HCT116 (cell line): ENCODE measurements at regions of chr18 and their contacts with region 1.

Region 1: DNA sequence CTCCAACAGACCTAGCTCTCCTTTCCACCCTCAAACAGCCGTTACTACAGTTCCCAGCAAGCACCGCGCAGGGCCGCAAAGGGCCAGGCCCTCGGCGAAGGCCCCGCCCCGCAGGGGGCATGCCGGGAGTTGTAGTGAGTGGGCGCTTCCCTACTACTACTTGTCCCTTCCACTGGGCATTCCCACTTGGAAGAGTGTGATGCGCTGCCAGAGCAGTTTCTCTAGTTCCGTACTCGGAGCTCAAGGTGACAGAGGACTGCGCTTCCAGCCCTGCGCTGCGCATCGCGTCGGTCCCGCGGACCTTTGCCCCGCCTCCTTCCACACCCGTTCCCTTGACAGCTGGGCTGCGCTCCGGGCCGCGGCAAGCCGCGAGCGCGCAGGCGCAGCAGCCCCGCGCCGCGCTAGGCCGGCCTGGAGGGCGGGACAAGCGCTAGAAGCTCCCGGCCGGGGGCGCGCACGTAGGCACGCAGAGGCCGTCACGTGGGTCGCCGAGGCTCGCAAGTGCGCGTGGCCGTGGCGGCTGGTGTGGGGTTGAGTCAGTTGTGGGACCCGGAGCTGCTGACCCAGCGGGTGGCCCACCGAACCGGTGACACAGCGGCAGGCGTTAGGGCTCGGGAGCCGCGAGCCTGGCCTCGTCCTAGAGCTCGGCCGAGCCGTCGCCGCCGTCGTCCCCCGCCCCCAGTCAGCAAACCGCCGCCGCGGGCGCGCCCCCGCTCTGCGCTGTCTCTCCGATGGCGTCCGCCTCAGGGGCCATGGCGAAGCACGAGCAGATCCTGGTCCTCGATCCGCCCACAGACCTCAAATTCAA is at the start of gene VAPA:
- DNase-seq: peak; percentile 90
- ATAC-seq: peak; percentile 87
- H3K4me3 ChIP-seq: peak within 1 kb of the TSS; percentile 64 to 78
- H3K27ac ChIP-seq: peak within 1 kb of the TSS; percentile 98
- H3K4me1 ChIP-seq: peaks cover 31 to 43% of the 10 kb centered on the region in 2 experiments
- H3K27me3 ChIP-seq: no peaks in the 10 kb centered on the region
- CTCF ChIP-seq: no peak
- POLR2A ChIP-seq: peak; percentile 63
- RAD21 ChIP-seq: no peak
- total RNA-seq, gene VAPA: 295 TPM

Region 2: GRCh38 chr18:9614401-9615279 is 299.1 kb before region 1 on chr18 and contains the start of gene PPP4R1:
- CTCF ChIA-PET with region 1: no interaction called
- POLR2A ChIA-PET with region 1: no interaction called
- RAD21 ChIA-PET with region 1: no interaction called
- intact Hi-C with region 1: loop called (anchors 10 kb)
- DNase-seq: no peak
- ATAC-seq: peak; percentile 76
- H3K4me3 ChIP-seq: peak within 1 kb of the TSS; percentile 78 to 87
- H3K27ac ChIP-seq: peak within 1 kb of the TSS; percentile 85
- H3K4me1 ChIP-seq: peaks cover 18 to 41% of the 10 kb centered on the region in 2 experiments
- H3K27me3 ChIP-seq: no peaks in the 10 kb centered on the region
- CTCF ChIP-seq: no peak
- POLR2A ChIP-seq: peak; percentile 43
- RAD21 ChIP-seq: no peak
- total RNA-seq, gene PPP4R1: 66.7 TPM

Region 3: DNA sequence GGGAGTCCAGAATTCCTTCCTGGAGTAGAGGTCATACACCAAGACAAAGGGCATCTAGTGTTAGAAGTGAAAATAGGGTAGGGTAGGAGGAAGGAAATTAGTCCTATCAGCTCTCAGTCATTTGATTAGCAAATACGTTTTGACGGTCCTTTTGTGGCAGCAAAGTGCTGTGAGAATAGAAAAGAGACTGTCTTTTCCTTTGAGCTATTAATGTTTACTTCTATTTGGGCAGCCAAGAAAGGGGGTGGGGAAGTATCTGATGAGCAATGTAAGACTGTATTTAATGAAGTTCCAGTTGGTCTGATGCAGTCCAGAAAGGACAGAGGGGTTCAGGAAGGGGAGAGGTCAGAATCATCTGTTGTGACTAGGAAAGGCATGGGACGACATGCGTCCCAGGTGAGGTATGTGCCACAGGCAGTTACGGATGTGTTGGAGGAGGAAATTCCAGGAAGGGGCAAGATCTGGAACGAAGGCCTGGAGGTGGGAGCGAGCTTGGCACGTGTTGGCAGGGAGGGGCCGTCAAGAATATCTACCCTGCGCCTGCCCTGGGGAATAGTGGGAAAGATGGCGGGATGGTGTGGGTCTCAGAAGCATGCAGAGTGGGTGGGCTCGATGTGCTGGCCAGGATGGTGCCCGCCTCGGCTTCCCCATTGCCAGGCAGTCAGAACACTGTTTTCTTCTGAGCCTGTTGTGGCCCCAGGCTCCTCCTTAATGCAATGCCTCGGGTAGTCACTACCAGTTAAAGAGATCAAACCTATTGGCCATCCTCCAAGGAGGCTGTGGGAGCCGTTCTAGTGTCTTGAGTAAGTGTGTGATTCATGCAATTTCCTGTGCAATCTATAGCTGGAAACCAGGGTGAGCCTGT is 85.9 kb before region 1 on chr18:
- CTCF ChIA-PET with region 1: interaction called, 3 read pairs
- POLR2A ChIA-PET with region 1: interaction called, 3 read pairs
- RAD21 ChIA-PET with region 1: no interaction called
- intact Hi-C with region 1: loop called (anchors 2 kb)
- DNase-seq: peak; percentile 97
- ATAC-seq: peak; percentile 81
- H3K4me3 ChIP-seq: peak overlapping the region in 1 of 2 experiments; percentile 42; a peak in 3 of 4 replicates
- H3K27ac ChIP-seq: peak overlapping the region; percentile 87
- H3K4me1 ChIP-seq: peaks cover 59 to 76% of the 10 kb centered on the region in 2 experiments
- H3K27me3 ChIP-seq: no peaks in the 10 kb centered on the region
- CTCF ChIP-seq: no peak
- POLR2A ChIP-seq: peak; percentile 31
- RAD21 ChIP-seq: no peak

Region 4: DNA sequence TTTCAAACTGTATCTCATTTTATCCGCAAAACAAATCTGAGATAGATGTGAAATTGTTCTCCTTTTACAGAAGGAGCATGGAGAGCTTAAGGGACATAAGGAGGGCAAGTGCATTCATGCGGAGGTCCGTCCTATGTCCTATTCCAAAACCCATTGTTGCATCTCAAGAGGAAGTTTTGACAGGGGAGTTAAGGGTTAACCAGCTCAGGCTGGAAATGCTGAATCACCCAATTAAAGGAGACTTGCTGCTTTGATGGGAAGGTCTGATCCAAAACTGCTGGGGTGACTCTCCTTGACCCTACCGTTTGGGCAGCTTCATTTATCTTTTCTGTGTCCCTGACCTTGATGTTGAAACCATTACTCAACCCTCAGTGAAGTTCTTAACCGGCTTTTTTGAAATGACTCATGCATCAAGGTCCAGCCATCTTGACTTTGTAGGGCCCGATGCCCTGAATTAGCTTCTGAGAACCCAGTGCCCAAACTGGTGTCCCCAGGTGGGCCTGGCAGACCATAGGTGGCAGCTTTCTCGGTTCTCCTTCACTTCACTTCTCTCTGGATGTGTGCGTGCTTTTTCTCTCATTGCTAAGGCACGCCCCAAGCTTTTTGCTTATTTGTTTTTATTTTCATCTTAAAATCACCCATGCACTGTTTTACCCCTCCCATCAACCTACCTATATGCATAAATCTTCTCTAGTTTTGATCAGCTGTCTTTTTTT is 43.9 kb before region 1 on chr18:
- CTCF ChIA-PET with region 1: no interaction called
- POLR2A ChIA-PET with region 1: interaction called, 12 read pairs
- RAD21 ChIA-PET with region 1: no interaction called
- intact Hi-C with region 1: loop called (anchors 1 kb)
- DNase-seq: peak; percentile 93
- ATAC-seq: peak; percentile 75
- H3K4me3 ChIP-seq: peak overlapping the region in 1 of 2 experiments; percentile 21; a peak in 2 of 4 replicates
- H3K27ac ChIP-seq: peak overlapping the region; percentile 73
- H3K4me1 ChIP-seq: peaks cover 33 to 69% of the 10 kb centered on the region in 2 experiments
- H3K27me3 ChIP-seq: no peaks in the 10 kb centered on the region
- CTCF ChIP-seq: no peak
- POLR2A ChIP-seq: no peak
- RAD21 ChIP-seq: peak; percentile 35; the same call in 1 of the 2 replicates

Region 5: GRCh38 chr18:9961041-9961440 is 47.3 kb after region 1 on chr18:
- CTCF ChIA-PET with region 1: no interaction called
- POLR2A ChIA-PET with region 1: no interaction called
- RAD21 ChIA-PET with region 1: no interaction called
- intact Hi-C with region 1: no loop called
- DNase-seq: no peak
- ATAC-seq: no peak; the same call in 1 of the 2 replicates
- H3K4me3 ChIP-seq: no peak overlapping the region
- H3K27ac ChIP-seq: no peak overlapping the region
- H3K4me1 ChIP-seq: no peaks in the 10 kb centered on the region; a peak in 1 of 4 replicates
- H3K27me3 ChIP-seq: no peaks in the 10 kb centered on the region
- CTCF ChIP-seq: no peak
- POLR2A ChIP-seq: no peak
- RAD21 ChIP-seq: no peak

Region 6: DNA sequence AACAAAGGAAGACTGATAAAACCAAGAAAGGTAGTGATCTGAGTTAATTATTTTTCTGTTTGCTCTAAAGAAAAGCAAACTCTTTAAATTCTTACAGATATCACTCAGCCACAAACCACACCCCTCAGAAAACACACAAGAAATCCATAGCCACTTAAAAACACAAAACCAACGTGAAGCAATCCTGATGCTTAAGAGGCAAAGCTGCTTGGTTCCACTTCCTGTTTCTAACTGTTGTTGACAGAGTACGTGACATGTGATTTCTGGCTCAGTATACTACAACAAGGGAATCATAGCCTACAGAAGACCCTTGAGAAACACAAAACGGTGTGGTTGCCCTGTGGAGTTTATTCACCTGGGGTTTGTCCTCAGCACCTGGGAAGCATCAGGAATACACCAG is 299.8 kb after region 1 on chr18:
- CTCF ChIA-PET with region 1: no interaction called
- POLR2A ChIA-PET with region 1: no interaction called
- RAD21 ChIA-PET with region 1: no interaction called
- intact Hi-C with region 1: no loop called
- DNase-seq: no peak
- ATAC-seq: no peak
- H3K4me3 ChIP-seq: no peak overlapping the region
- H3K27ac ChIP-seq: no peak overlapping the region
- H3K4me1 ChIP-seq: no peaks in the 10 kb centered on the region
- H3K27me3 ChIP-seq: 0 out of 2 replicates have a peak, but pooled peaks cover 7% of the 10 kb centered on the region
- CTCF ChIP-seq: no peak
- POLR2A ChIP-seq: no peak
- RAD21 ChIP-seq: no peak